ENCODE measurements at regions of chr1 and their contacts with region 1.

Region 1: GRCh38 chr1:168774241-168774640 is 45.2 kb upstream of the DPT start:
- DNase-seq: peak; percentile 71
- ATAC-seq: peak; percentile 98

Region 2: GRCh38 chr1:168834225-168834872 is 60.1 kb after region 1 on chr1:
- intact Hi-C with region 1: loop called (anchors 5 kb)
- DNase-seq: no peak
- ATAC-seq: peak; percentile 59

Measured in Right ventricle myocardium inferior (tissue), 1 donor.